Dendritic cell treated with granulocyte-macrophage colony-stimulating factor and Interleukin-4, amounts not matched to agents 40 ng/mL and 50 ng/mL, for 4 days (primary cell): ENCODE measurements at regions of chr11 and their contacts with region 1.

Region 1: GRCh38 chr11:93784152-93784934 is at the start of gene MED17:
- H3K4me3 Mint-ChIP-seq: peak within 1 kb of the TSS; percentile 88
- H3K27ac Mint-ChIP-seq: peak within 1 kb of the TSS; percentile 90
- H3K4me1 Mint-ChIP-seq: peaks cover 31% of the 10 kb centered on the region
- H3K27me3 Mint-ChIP-seq: no peaks in the 10 kb centered on the region

Region 2: GRCh38 chr11:92744929-92745585 is 1039.3 kb before region 1 on chr11:
- intact Hi-C with region 1: no loop called
- H3K4me3 Mint-ChIP-seq: no peak overlapping the region
- H3K27ac Mint-ChIP-seq: no peak overlapping the region
- H3K4me1 Mint-ChIP-seq: no peaks in the 10 kb centered on the region
- H3K27me3 Mint-ChIP-seq: no peaks in the 10 kb centered on the region

Region 3: DNA sequence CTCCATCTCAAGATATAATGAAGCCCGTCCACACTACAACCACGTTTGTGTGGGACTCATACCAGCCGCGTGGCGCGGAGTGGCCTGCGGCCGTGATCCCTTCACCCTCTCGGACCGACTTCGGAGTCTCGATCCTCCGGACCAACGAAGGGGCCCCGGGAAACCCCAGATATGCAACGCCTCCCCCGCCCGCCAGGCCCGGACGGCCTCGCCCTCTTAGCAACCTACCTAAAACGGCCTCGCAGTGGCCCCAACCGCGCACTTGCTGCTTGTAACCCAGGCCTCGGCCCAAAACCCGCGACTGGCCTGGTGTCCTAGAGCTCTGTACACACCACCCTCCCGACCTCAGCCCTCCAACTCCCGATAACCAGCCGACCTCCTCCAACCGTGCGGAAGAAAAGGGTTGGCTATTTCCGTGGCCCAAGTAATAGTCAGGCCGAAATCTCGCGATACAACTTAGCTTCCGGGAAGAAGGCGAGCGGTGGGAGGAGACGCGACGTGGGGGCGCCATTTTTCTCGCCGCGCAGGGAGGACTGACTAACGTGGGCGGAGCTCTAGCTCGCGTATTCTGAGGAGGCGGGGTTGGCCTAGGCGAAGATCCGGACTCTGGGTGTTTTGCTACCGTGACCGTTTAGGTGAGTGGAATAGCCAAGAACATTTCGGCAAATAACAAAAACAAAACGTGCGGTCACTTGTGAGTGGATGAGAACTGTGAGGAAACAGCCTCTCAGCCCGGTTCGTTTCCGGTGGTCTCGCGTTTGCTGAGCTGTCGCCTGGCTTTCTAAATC is 43.1 kb before region 1 on chr11 and contains the starts of genes C11orf54 and TAF1D:
- intact Hi-C with region 1: loop called (anchors 1 kb)
- H3K4me3 Mint-ChIP-seq: peak within 1 kb of the TSS; percentile 99
- H3K27ac Mint-ChIP-seq: peak within 1 kb of the TSS; percentile 100
- H3K4me1 Mint-ChIP-seq: peaks cover 53% of the 10 kb centered on the region
- H3K27me3 Mint-ChIP-seq: no peaks in the 10 kb centered on the region